ENCODE measurements at regions of chr6 and their contacts with region 1.

Region 1: GRCh38 chr6:155253337-155253736 is 10.5 kb upstream of the CLDN20 start:
- DNase-seq: peak in 1 of 2 experiments; percentile 33
- H3K4me3 ChIP-seq: no peak overlapping the region
- H3K27ac ChIP-seq: no peak overlapping the region
- H3K4me1 ChIP-seq: peaks cover 0 to 3% (median 3%) of the 10 kb centered on the region in 4 experiments; a peak in 2 of 7 replicates
- H3K27me3 ChIP-seq: no peaks in the 10 kb centered on the region
- CTCF ChIP-seq: no peak
- EP300 ChIP-seq: no peak
- POLR2A ChIP-seq: no peak
- RAD21 ChIP-seq: no peak

Region 2: GRCh38 chr6:155235087-155235486 is 18.2 kb before region 1 on chr6:
- CTCF ChIA-PET with region 1: interaction called, 48 read pairs
- POLR2A ChIA-PET with region 1: interaction called, 3 read pairs
- DNase-seq: no peak
- H3K4me3 ChIP-seq: no peak overlapping the region
- H3K27ac ChIP-seq: no peak overlapping the region
- H3K4me1 ChIP-seq: peaks cover 0 to 4% (median 0%) of the 10 kb centered on the region in 4 experiments; a peak in 2 of 7 replicates
- H3K27me3 ChIP-seq: no peaks in the 10 kb centered on the region
- CTCF ChIP-seq: no peak
- EP300 ChIP-seq: no peak
- POLR2A ChIP-seq: no peak
- RAD21 ChIP-seq: no peak

Region 3: DNA sequence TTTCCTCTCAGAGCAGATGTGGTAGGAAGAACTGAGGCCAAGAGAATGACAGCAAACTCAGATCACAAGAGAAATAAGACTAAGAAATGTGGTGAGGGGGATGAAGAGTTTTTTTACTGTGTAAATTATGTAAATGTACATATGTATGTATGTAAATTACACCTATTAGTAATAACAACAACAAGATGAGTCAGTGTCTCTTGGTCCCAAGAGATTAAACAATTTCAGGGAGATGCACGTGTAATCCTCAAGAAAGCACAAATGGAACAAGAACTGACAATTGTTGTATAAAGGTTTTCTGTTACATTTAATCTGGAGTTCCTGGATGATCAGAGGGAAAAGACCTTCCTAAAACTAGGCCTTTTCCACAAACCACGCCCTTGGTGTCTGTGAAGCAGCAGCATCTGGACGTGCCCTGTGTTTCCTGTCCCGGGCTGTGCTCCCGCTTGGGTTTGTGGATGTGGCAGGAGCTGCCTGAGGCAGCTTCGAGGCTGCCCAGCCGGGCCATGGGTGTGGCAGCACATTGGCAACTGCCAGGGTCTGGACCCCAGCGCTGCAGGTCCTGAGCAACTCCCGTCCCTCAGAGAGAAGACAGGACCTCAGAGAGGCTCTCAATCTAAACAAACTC is 11.5 kb after region 1 on chr6:
- CTCF ChIA-PET with region 1: interaction called, 72 read pairs
- POLR2A ChIA-PET with region 1: interaction called, 5 read pairs
- DNase-seq: no peak
- H3K4me3 ChIP-seq: no peak overlapping the region
- H3K27ac ChIP-seq: no peak overlapping the region
- H3K4me1 ChIP-seq: peaks cover 0 to 7% (median 4%) of the 10 kb centered on the region in 4 experiments; a peak in 4 of 7 replicates
- H3K27me3 ChIP-seq: no peaks in the 10 kb centered on the region
- CTCF ChIP-seq: no peak
- EP300 ChIP-seq: no peak
- POLR2A ChIP-seq: no peak
- RAD21 ChIP-seq: no peak

Region 4: DNA sequence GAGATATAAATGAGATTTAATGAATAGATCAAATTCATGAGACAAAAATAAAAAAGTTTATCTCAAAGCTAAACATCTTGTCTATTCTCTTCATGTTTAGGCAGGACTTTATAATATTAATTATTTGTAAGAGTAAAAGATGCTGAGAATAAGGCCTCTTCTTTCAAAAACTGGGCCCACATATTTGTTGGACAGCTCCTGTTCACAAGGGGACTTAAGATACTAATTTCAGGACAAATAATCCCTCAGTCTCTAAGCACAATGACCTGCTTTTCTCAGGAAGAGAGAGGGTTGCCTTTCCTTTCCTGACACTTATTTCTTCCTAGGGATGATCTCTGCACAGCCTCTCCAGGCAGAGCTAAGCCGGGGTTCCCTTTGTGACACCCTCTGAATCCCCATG is 159.0 kb after region 1 on chr6:
- CTCF ChIA-PET with region 1: no interaction called
- POLR2A ChIA-PET with region 1: no interaction called
- DNase-seq: no peak
- H3K4me3 ChIP-seq: no peak overlapping the region
- H3K27ac ChIP-seq: no peak overlapping the region
- H3K4me1 ChIP-seq: peaks cover 0 to 2% (median under 1%) of the 10 kb centered on the region in 4 experiments; a peak in 2 of 7 replicates
- H3K27me3 ChIP-seq: no peaks in the 10 kb centered on the region
- CTCF ChIP-seq: no peak
- EP300 ChIP-seq: no peak
- POLR2A ChIP-seq: no peak
- RAD21 ChIP-seq: no peak

Measured in H1 (cell line).